ENCODE measurements at regions of chr4 and their contacts with region 1.

Region 1: GRCh38 chr4:149999485-150000074 is 78.7 kb upstream of the DCLK2 start:
- DNase-seq: peak in 2 of 4 donors; percentile 61 to 80
- ATAC-seq: peak; percentile 82
- H3K4me3 ChIP-seq: no peak overlapping the region
- H3K27ac ChIP-seq: no peak overlapping the region
- H3K4me1 ChIP-seq: no peaks in the 10 kb centered on the region
- H3K27me3 ChIP-seq: no peaks in the 10 kb centered on the region
- CTCF ChIP-seq: peak; percentile 11 to 62

Region 2: DNA sequence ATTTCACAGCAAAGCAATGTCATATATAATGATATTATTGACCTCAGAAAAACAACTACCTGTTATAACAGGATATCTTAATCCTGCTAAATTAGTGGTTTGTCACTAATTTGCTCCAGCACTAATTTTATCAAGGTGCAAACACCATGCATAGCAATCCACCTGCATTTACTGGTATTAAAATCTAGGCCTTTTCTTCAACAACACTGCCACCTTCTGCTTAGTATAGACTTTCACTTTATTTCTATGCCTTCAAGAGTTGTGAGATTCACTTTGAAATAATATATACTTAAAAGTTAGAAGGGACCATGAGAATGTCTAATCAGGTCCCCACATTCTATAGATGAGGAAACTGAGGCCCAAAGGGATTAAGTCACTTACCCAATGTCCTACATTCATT is 101.8 kb before region 1 on chr4:
- intact Hi-C with region 1: no loop called
- DNase-seq: no peak
- ATAC-seq: peak; percentile 64
- H3K4me3 ChIP-seq: no peak overlapping the region
- H3K27ac ChIP-seq: no peak overlapping the region
- H3K4me1 ChIP-seq: no peaks in the 10 kb centered on the region
- H3K27me3 ChIP-seq: no peaks in the 10 kb centered on the region
- CTCF ChIP-seq: peak in 1 of 2 donors; percentile 19

Region 3: DNA sequence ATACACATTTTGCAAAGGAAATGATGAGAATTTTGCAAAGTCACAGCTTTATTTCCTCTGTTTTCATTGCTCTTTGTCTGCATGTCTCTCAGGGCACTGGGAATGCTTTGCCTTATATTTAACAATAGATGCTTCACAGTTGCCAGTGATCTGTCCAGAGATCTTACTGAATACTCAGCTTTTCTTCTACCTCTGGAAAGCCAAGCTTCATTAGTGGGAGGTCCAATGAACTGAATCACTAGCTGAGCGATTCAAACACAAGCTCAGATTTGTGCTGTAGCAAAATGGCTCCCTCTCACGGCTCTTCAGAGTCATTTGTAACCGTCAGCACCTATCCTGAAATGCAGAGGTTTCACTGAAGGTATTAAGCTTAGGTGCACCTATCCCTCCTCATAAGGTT is 217.6 kb after region 1 on chr4:
- intact Hi-C with region 1: loop called in 1 of 2 experiments (anchors 10 kb)
- DNase-seq: peak in 1 of 4 donors; percentile 24
- ATAC-seq: peak; percentile 58
- H3K4me3 ChIP-seq: no peak overlapping the region
- H3K27ac ChIP-seq: no peak overlapping the region
- H3K4me1 ChIP-seq: no peaks in the 10 kb centered on the region
- H3K27me3 ChIP-seq: no peaks in the 10 kb centered on the region
- CTCF ChIP-seq: no peak

Region 4: GRCh38 chr4:150242820-150243458 is 243.4 kb after region 1 on chr4:
- intact Hi-C with region 1: loop called in 1 of 2 experiments (anchors 10 kb)
- DNase-seq: peak in 1 of 4 donors; percentile 53
- ATAC-seq: peak; percentile 74
- H3K4me3 ChIP-seq: no peak overlapping the region
- H3K27ac ChIP-seq: no peak overlapping the region
- H3K4me1 ChIP-seq: no peaks in the 10 kb centered on the region
- H3K27me3 ChIP-seq: no peaks in the 10 kb centered on the region
- CTCF ChIP-seq: peak; percentile 67 to 92

Region 5: DNA sequence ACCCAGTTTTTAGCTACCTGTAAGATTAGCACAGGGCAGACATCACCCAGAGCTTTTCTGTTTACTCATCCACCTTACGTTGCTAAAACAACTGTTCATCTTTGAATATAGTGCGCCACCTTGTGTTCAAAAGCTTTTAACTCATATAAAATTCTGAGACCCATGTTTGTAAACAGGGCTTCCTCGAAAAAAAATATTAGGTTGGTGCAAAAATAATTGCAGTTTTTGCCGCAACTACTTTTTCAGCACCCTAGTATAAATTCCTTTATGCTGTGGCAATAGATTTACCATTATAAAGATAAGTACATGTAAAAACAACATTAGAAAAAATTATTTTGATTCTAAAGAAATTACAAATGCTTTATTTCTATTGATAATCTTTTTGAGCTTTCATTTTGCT is 867.6 kb after region 1 on chr4:
- intact Hi-C with region 1: loop called in 1 of 2 experiments (anchors 10 kb)
- DNase-seq: peak in 2 of 4 donors; percentile 59 to 82
- ATAC-seq: peak; percentile 92
- H3K4me3 ChIP-seq: no peak overlapping the region
- H3K27ac ChIP-seq: no peak overlapping the region
- H3K4me1 ChIP-seq: no peaks in the 10 kb centered on the region
- H3K27me3 ChIP-seq: no peaks in the 10 kb centered on the region
- CTCF ChIP-seq: peak; percentile 36 to 49